HepG2 (cell line): ENCODE measurements at regions of chr11 and their contacts with region 1.

Region 1: GRCh38 chr11:102109896-102110760 is at the start of gene YAP1:
- DNase-seq: peak; percentile 83
- ATAC-seq: peak; percentile 79
- H3K4me3 ChIP-seq: peak within 1 kb of the TSS; percentile 88 to 97 (median 93)
- H3K27ac ChIP-seq: peak within 1 kb of the TSS; percentile 98
- H3K4me1 ChIP-seq: peaks cover 32% of the 10 kb centered on the region
- H3K27me3 ChIP-seq: no peaks in the 10 kb centered on the region; a peak in 1 of 5 replicates
- CTCF ChIP-seq: peak; percentile 20
- EP300 ChIP-seq: peak in 1 of 2 experiments; percentile 66; a peak in 2 of 4 replicates
- POLR2A ChIP-seq: peak; percentile 54 to 71
- RAD21 ChIP-seq: peak; percentile 81; the same call in 1 of the 2 replicates
- total RNA-seq, gene YAP1: 91.0 and 108 TPM in 2 replicates

Region 2: DNA sequence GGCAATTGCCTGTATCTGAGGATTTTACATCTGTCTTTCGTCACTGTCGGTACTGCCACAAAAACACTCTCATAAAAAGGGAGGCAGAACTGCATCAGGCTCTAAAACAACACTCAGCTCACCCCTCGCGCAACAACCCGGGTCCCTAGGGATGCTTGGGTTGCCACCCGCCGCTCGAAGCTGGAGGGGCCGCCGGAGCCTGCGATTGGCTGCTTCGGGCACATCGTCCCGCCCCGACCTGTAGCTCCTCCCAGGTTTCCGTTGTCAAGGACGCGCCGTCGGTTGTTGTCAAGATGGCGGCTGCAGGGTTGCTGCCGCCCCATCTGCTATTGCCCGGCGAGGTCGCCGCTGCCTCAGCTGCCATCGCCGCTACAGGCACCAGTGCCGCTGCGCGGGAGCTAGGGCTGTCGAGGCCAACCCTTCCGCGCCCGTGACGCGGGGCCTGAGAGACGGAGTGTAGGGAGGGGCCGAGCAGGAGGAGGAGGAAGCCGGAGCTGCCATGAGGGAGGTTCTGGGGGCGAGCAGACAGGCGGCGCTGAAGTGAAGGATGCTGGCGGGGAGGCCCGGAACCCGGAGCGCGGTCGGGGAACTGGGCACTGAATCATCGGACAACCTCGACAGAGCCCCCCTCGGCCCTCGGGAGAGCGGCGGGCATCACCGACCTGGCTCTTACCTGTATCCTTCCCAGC is 195.2 kb before region 1 on chr11 and contains the start of gene CEP126:
- CTCF ChIA-PET with region 1: no interaction called
- POLR2A ChIA-PET with region 1: no interaction called
- in situ Hi-C with region 1: no loop called
- intact Hi-C with region 1: loop called (anchors 10 kb)
- DNase-seq: peak; percentile 84
- ATAC-seq: peak; percentile 95
- H3K4me3 ChIP-seq: peak within 1 kb of the TSS; percentile 78 to 85 (median 84)
- H3K27ac ChIP-seq: peak within 1 kb of the TSS; percentile 67
- H3K4me1 ChIP-seq: peaks cover 34% of the 10 kb centered on the region
- H3K27me3 ChIP-seq: no peaks in the 10 kb centered on the region
- CTCF ChIP-seq: peak; percentile 84
- EP300 ChIP-seq: no peak
- POLR2A ChIP-seq: peak; percentile 42; a peak in 3 of 4 replicates
- RAD21 ChIP-seq: peak; percentile 71
- total RNA-seq, gene CEP126: 1.4 and 1.8 TPM in 2 replicates

Region 3: GRCh38 chr11:102135256-102135655 is 25.1 kb after region 1 on chr11:
- CTCF ChIA-PET with region 1: no interaction called
- POLR2A ChIA-PET with region 1: no interaction called
- in situ Hi-C with region 1: no loop called
- intact Hi-C with region 1: no loop called
- DNase-seq: no peak
- ATAC-seq: no peak
- H3K4me3 ChIP-seq: no peak overlapping the region
- H3K27ac ChIP-seq: no peak overlapping the region
- H3K4me1 ChIP-seq: peaks cover 24% of the 10 kb centered on the region
- H3K27me3 ChIP-seq: no peaks in the 10 kb centered on the region
- CTCF ChIP-seq: no peak
- EP300 ChIP-seq: no peak
- POLR2A ChIP-seq: no peak
- RAD21 ChIP-seq: no peak

Region 4: GRCh38 chr11:102187416-102188151 is 77.5 kb after region 1 on chr11:
- CTCF ChIA-PET with region 1: no interaction called
- POLR2A ChIA-PET with region 1: interaction called, 6 read pairs
- in situ Hi-C with region 1: no loop called
- intact Hi-C with region 1: loop called (anchors 1 kb)
- DNase-seq: peak; percentile 41
- ATAC-seq: no peak
- H3K4me3 ChIP-seq: peak overlapping the region in 1 of 3 experiments; percentile 7; a peak in 1 of 6 replicates
- H3K27ac ChIP-seq: peak overlapping the region; percentile 72
- H3K4me1 ChIP-seq: peaks cover 87% of the 10 kb centered on the region
- H3K27me3 ChIP-seq: no peaks in the 10 kb centered on the region
- CTCF ChIP-seq: no peak
- EP300 ChIP-seq: peak in 1 of 2 experiments; percentile 21; a peak in 1 of 4 replicates
- POLR2A ChIP-seq: no peak
- RAD21 ChIP-seq: no peak

Region 5: GRCh38 chr11:102279641-102280170 is 169.6 kb after region 1 on chr11:
- CTCF ChIA-PET with region 1: no interaction called
- POLR2A ChIA-PET with region 1: interaction called, 3 read pairs
- in situ Hi-C with region 1: no loop called
- intact Hi-C with region 1: loop called (anchors 1 kb)
- DNase-seq: peak; percentile 98
- ATAC-seq: peak; percentile 97
- H3K4me3 ChIP-seq: peak overlapping the region in 2 of 3 experiments; percentile 4 to 42; a peak in 2 of 6 replicates
- H3K27ac ChIP-seq: peak overlapping the region; percentile 91
- H3K4me1 ChIP-seq: peaks cover 94% of the 10 kb centered on the region
- H3K27me3 ChIP-seq: no peaks in the 10 kb centered on the region
- CTCF ChIP-seq: peak; percentile 48
- EP300 ChIP-seq: peak; percentile 70 to 93; a peak in 3 of 4 replicates
- POLR2A ChIP-seq: no peak
- RAD21 ChIP-seq: peak; percentile 46; the same call in 1 of the 2 replicates

Region 6: GRCh38 chr11:102306048-102306585 is 196.0 kb after region 1 on chr11:
- CTCF ChIA-PET with region 1: no interaction called
- POLR2A ChIA-PET with region 1: no interaction called
- in situ Hi-C with region 1: no loop called
- intact Hi-C with region 1: no loop called
- DNase-seq: no peak
- ATAC-seq: peak; percentile 50
- H3K4me3 ChIP-seq: no peak overlapping the region
- H3K27ac ChIP-seq: no peak overlapping the region
- H3K4me1 ChIP-seq: peaks cover 25% of the 10 kb centered on the region
- H3K27me3 ChIP-seq: no peaks in the 10 kb centered on the region; a peak in 1 of 5 replicates
- CTCF ChIP-seq: peak; percentile 36; the same call in 1 of the 2 replicates
- EP300 ChIP-seq: no peak
- POLR2A ChIP-seq: no peak
- RAD21 ChIP-seq: no peak